HepG2 (cell line): ENCODE measurements at regions of chr2 and their contacts with region 1.

Region 1: GRCh38 chr2:162301151-162301804 is 17.2 kb downstream of the IFIH1 start:
- DNase-seq: peak; percentile 62
- ATAC-seq: peak; percentile 87
- H3K4me3 ChIP-seq: no peak overlapping the region
- H3K27ac ChIP-seq: no peak overlapping the region
- H3K4me1 ChIP-seq: no peaks in the 10 kb centered on the region
- H3K27me3 ChIP-seq: no peaks in the 10 kb centered on the region
- CTCF ChIP-seq: peak; percentile 80
- EP300 ChIP-seq: no peak
- POLR2A ChIP-seq: no peak
- RAD21 ChIP-seq: peak; percentile 12; the same call in 1 of the 2 replicates

Region 2: GRCh38 chr2:161586517-161587167 is 714.6 kb before region 1 on chr2:
- CTCF ChIA-PET with region 1: interaction called, 8 read pairs
- POLR2A ChIA-PET with region 1: no interaction called
- in situ Hi-C with region 1: loop called (anchors 25 kb)
- intact Hi-C with region 1: no loop called
- DNase-seq: peak; percentile 22
- ATAC-seq: peak; percentile 66
- H3K4me3 ChIP-seq: no peak overlapping the region
- H3K27ac ChIP-seq: no peak overlapping the region
- H3K4me1 ChIP-seq: no peaks in the 10 kb centered on the region
- H3K27me3 ChIP-seq: no peaks in the 10 kb centered on the region
- CTCF ChIP-seq: peak; percentile 69
- EP300 ChIP-seq: no peak
- POLR2A ChIP-seq: no peak
- RAD21 ChIP-seq: peak; percentile 60

Region 3: DNA sequence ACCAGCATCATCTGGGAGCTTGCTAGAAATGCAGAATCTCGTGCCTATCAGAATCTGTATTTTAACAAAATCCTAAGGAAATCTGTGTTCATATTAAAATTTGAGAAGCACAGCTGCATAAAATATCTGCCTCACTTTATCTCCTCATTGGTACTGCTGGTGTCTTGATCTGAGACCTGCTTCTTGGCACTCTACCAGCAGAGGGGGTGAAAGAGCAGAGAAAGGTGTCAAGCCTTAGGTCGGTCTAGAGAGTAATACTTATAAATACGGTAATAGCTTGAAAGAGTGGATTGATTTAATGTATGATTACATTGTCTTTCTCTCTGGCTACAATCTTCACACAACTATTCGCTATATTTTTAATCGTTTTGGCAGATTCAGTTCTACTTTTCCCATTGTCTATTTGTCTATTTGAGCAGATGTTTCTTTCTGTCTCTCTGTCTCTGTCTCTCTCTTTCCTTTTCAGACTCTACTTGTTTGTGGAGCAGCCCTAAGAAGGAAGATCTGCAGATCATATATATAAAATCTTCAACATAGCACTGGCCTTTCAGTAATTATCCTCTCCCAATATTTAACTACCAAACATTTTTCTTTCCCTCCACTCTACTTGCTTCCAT is 147.6 kb before region 1 on chr2:
- CTCF ChIA-PET with region 1: interaction called, 11 read pairs
- POLR2A ChIA-PET with region 1: no interaction called
- in situ Hi-C with region 1: loop called (anchors 5 kb)
- intact Hi-C with region 1: loop called (anchors 1 kb)
- DNase-seq: peak; percentile 56
- ATAC-seq: peak; percentile 99
- H3K4me3 ChIP-seq: no peak overlapping the region
- H3K27ac ChIP-seq: no peak overlapping the region
- H3K4me1 ChIP-seq: no peaks in the 10 kb centered on the region
- H3K27me3 ChIP-seq: peaks cover 0 to 4% of the 10 kb centered on the region in 2 experiments; a peak in 1 of 5 replicates
- CTCF ChIP-seq: peak; percentile 76
- EP300 ChIP-seq: no peak
- POLR2A ChIP-seq: no peak
- RAD21 ChIP-seq: peak; percentile 39; the same call in 1 of the 2 replicates

Region 4: GRCh38 chr2:162221064-162221463 is 80.2 kb before region 1 on chr2:
- CTCF ChIA-PET with region 1: interaction called, 38 read pairs
- POLR2A ChIA-PET with region 1: no interaction called
- in situ Hi-C with region 1: loop called (anchors 5 kb)
- intact Hi-C with region 1: loop called (anchors 1 kb)
- DNase-seq: peak; percentile 56
- ATAC-seq: peak; percentile 99
- H3K4me3 ChIP-seq: no peak overlapping the region
- H3K27ac ChIP-seq: no peak overlapping the region
- H3K4me1 ChIP-seq: no peaks in the 10 kb centered on the region
- H3K27me3 ChIP-seq: no peaks in the 10 kb centered on the region
- CTCF ChIP-seq: peak; percentile 95
- EP300 ChIP-seq: no peak
- POLR2A ChIP-seq: no peak
- RAD21 ChIP-seq: peak; percentile 74

Region 5: DNA sequence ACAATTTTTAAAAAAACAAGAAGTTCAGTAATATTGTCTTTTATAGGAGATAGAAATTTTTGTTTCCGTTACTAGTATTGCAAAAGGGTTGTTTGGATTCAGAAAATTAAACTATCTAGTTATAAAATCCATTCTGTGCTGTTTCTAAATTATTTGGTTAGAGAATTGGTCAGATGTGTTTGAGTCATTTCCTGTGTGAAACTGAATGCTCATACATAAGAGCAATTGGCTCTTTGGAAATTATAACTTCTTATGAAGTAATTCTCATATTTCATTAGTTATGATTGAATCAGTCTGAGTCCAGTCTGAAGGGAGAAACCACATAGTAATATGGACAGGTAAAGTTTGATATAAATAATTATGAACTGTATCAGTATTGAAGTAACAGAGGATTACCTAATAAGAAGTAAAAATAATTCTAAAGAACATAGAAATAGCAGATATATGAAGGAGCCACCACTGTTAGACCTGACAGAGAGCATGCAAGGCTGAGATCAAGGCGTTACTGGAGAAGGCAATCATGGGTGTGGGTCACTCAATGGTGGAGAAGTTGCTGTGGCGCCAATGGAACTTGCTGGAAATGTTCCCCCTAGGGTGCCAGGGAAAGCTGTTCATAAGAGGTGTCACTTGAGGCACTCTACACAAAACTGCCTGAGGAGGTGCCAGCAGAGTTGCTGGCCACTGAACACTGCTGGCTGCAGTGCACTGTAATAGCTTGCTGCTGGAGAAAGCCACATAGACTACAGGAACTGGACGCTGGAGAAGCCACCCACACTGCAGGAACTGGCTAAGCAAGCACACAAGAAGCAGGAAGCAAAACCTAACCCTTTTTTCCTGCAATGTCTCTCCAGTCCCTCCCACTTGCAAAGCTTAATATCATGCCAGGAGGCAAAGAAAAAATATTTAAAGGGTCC is 40.0 kb before region 1 on chr2:
- CTCF ChIA-PET with region 1: no interaction called
- POLR2A ChIA-PET with region 1: no interaction called
- in situ Hi-C with region 1: no loop called
- intact Hi-C with region 1: no loop called
- DNase-seq: no peak
- ATAC-seq: peak; percentile 71
- H3K4me3 ChIP-seq: no peak overlapping the region
- H3K27ac ChIP-seq: no peak overlapping the region
- H3K4me1 ChIP-seq: no peaks in the 10 kb centered on the region
- H3K27me3 ChIP-seq: no peaks in the 10 kb centered on the region
- CTCF ChIP-seq: no peak
- EP300 ChIP-seq: no peak
- POLR2A ChIP-seq: no peak
- RAD21 ChIP-seq: no peak